Sciatic nerve (tissue), 2 donors: ENCODE measurements at regions of chr12 and their contacts with region 1.

Region 1: GRCh38 chr12:73057426-73057825 is 785.3 kb downstream of the TRHDE start:
- DNase-seq: no peak
- ATAC-seq: no peak

Region 2: GRCh38 chr12:71299541-71300376 is 1757.7 kb before region 1 on chr12:
- intact Hi-C with region 1: no loop called
- DNase-seq: no peak
- ATAC-seq: no peak

Region 3: GRCh38 chr12:73017981-73018380 is 39.4 kb before region 1 on chr12:
- intact Hi-C with region 1: no loop called
- DNase-seq: no peak
- ATAC-seq: no peak

Region 4: DNA sequence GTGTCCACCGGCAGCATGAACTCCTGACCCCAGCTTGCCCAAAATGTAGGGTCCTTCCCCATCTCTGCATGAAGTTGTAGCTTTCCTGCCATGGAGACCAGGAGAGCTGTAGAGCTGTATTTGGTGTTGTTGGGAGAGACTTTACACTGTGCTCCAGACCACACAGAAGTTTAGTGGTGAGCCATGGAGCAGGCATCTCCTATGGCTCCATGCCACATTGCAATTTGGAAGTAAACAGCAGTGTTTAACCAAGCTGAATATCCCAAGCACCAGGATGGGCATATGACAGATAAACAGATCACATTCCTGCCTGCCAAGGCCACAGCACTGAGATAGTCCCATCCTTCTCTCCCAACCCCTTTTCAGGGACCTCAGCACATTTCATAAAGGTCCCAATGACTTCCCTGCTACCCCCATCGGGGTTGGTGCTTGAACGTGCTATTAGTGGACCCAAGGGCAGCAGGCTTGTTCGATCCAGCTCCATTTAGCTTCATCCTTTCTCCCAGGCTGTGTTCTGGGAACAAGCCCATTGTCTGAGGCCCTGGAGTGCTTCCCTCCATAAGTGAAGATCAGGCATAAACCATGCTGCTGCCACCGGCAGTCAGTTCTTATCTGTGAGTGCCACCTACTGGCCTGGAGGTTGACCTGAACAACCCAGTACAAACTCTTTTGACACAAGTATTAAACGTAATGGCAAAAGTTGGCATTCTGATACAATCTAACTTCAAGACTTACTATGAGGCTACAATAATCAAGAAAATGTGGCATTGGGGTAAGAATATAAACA is 1307.9 kb after region 1 on chr12:
- intact Hi-C with region 1: loop called (anchors 5 kb)
- DNase-seq: no peak
- ATAC-seq: peak; percentile 65